Heart left ventricle (tissue), 16 donors: ENCODE measurements at regions of chr5 and their contacts with region 1.

Region 1: GRCh38 chr5:56026863-56027300 is 32.1 kb upstream of the IL6ST start:
- DNase-seq: no peak
- ATAC-seq: no peak
- H3K4me3 ChIP-seq: no peak overlapping the region
- H3K27ac ChIP-seq: peak overlapping the region in 1 of 12 donors; percentile 28
- H3K4me1 ChIP-seq: peaks cover 0 to 4% (median 0%) of the 10 kb centered on the region in 12 donors
- H3K27me3 ChIP-seq: no peaks in the 10 kb centered on the region
- CTCF ChIP-seq: no peak
- POLR2A ChIP-seq: no peak

Region 2: DNA sequence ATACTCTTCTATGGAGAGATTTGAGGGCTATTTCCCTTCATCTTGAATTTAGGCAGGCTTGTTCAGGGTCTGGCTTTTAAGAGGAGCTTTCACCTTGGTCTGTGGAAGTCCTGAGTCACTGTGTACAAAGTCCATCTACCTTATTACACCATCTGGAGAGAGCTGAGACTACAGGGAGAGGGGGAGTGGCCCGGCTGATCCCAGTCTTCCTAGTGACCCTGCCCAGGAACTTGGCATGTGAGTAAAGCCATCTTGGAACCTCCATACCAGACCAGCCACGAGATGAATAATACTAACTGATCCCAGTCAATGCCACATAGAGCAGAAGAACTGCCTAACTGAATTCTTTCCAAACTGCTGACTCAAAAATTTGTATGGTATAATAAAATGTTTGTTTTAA is 23.7 kb before region 1 on chr5:
- intact Hi-C with region 1: loop called in 1 of 10 experiments (anchors 2 kb)
- DNase-seq: no peak
- ATAC-seq: no peak
- H3K4me3 ChIP-seq: no peak overlapping the region
- H3K27ac ChIP-seq: no peak overlapping the region
- H3K4me1 ChIP-seq: no peaks in the 10 kb centered on the region
- H3K27me3 ChIP-seq: no peaks in the 10 kb centered on the region
- CTCF ChIP-seq: no peak
- POLR2A ChIP-seq: no peak

Region 3: GRCh38 chr5:56233230-56233629 is 206.3 kb after region 1 on chr5 and contains the start of gene ANKRD55:
- intact Hi-C with region 1: no loop called
- DNase-seq: no peak
- ATAC-seq: peak in 1 of 4 donors; percentile 31
- H3K4me3 ChIP-seq: no peak within 1 kb of the TSS
- H3K27ac ChIP-seq: no peak within 1 kb of the TSS
- H3K4me1 ChIP-seq: peaks cover 0 to 4% (median 0%) of the 10 kb centered on the region in 12 donors
- H3K27me3 ChIP-seq: no peaks in the 10 kb centered on the region
- CTCF ChIP-seq: no peak
- POLR2A ChIP-seq: no peak
- total RNA-seq, gene ANKRD55: 0.11 to 0.15 TPM in 2 of 9 donors, not detected in the others